Psoas muscle (tissue), 8 donors: ENCODE measurements at regions of chr11 and their contacts with region 1.

Region 1: DNA sequence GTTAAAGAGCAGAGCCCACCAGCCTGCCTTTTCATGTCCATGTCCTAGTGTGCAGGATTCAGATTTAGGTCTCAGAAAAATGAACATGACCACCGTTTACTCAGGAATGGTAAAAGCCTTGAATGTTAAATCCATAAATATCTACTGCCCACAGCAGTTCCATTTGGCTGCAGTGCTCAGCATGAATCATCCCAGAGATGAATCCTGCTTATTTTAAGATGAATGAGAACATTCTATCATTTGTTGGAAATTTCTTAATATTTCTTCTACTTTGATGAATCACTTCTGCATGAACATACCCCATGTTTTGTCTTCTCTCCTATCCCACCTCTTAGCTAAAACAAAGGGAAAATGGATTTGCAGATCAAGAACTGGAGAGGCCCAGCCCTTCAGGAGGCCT is 47.5 kb upstream of the AQP11 start:
- DNase-seq: no peak
- ATAC-seq: no peak
- H3K4me3 ChIP-seq: no peak overlapping the region
- H3K27ac ChIP-seq: no peak overlapping the region
- H3K4me1 ChIP-seq: no peaks in the 10 kb centered on the region
- H3K27me3 ChIP-seq: no peaks in the 10 kb centered on the region
- CTCF ChIP-seq: no peak

Region 2: GRCh38 chr11:77411717-77412441 is 130.4 kb before region 1 on chr11:
- intact Hi-C with region 1: no loop called
- DNase-seq: peak; percentile 82 to 91
- ATAC-seq: peak; percentile 85 to 93 (median 90)
- H3K4me3 ChIP-seq: peak overlapping the region; percentile 81
- H3K27ac ChIP-seq: peak overlapping the region; percentile 85
- H3K4me1 ChIP-seq: peaks cover 14% of the 10 kb centered on the region
- H3K27me3 ChIP-seq: no peaks in the 10 kb centered on the region
- CTCF ChIP-seq: no peak

Region 3: GRCh38 chr11:77442394-77443053 is 99.8 kb before region 1 on chr11:
- intact Hi-C with region 1: no loop called
- DNase-seq: no peak
- ATAC-seq: no peak
- H3K4me3 ChIP-seq: no peak overlapping the region
- H3K27ac ChIP-seq: no peak overlapping the region
- H3K4me1 ChIP-seq: no peaks in the 10 kb centered on the region
- H3K27me3 ChIP-seq: no peaks in the 10 kb centered on the region
- CTCF ChIP-seq: no peak

Region 4: DNA sequence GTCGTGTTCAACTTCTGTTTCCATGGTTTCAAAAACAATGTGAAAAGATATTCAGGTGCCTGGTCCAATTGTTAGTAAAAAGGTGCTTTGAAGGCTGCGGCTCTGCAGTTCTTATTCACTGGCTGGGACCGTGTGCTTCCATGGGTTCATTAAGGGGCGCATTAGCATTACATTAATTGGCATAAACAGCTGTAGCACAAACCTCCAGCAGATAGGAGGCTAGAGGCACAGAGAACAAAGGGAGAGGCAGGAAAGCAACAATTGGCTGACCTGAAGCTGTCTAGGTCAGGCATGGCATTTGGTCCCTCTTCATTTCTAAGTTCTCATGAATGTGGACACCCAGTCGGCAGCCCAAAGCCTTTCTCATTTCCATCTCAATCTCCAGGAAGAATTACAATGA is 85.0 kb before region 1 on chr11:
- intact Hi-C with region 1: no loop called
- DNase-seq: no peak
- ATAC-seq: peak in 2 of 4 donors; percentile 36 to 49
- H3K4me3 ChIP-seq: no peak overlapping the region
- H3K27ac ChIP-seq: peak overlapping the region; percentile 33
- H3K4me1 ChIP-seq: peaks cover 19% of the 10 kb centered on the region
- H3K27me3 ChIP-seq: no peaks in the 10 kb centered on the region
- CTCF ChIP-seq: no peak

Region 5: DNA sequence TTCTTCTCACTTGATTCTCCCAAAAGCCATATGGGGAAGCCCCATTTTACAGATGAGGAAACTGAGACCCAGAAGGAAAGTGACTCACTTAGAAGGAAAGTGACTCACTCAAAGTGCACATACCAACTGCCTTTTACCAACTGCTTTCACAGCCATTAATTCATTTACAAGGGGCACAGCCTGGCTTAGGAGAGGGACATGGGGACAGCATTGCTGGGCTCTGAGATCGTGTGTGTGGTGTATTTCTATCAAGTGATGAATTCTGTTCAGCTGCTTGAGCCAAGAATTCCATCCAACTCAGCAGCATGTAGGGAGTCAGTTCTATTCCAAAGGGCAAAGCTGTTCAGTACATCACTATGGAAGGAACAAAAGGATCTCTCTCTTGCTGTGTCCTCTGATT is 44.9 kb before region 1 on chr11:
- intact Hi-C with region 1: loop called in 1 of 2 experiments (anchors 2 kb)
- DNase-seq: no peak
- ATAC-seq: peak in 1 of 4 donors; percentile 55
- H3K4me3 ChIP-seq: no peak overlapping the region
- H3K27ac ChIP-seq: no peak overlapping the region
- H3K4me1 ChIP-seq: no peaks in the 10 kb centered on the region
- H3K27me3 ChIP-seq: no peaks in the 10 kb centered on the region
- CTCF ChIP-seq: no peak

Region 6: DNA sequence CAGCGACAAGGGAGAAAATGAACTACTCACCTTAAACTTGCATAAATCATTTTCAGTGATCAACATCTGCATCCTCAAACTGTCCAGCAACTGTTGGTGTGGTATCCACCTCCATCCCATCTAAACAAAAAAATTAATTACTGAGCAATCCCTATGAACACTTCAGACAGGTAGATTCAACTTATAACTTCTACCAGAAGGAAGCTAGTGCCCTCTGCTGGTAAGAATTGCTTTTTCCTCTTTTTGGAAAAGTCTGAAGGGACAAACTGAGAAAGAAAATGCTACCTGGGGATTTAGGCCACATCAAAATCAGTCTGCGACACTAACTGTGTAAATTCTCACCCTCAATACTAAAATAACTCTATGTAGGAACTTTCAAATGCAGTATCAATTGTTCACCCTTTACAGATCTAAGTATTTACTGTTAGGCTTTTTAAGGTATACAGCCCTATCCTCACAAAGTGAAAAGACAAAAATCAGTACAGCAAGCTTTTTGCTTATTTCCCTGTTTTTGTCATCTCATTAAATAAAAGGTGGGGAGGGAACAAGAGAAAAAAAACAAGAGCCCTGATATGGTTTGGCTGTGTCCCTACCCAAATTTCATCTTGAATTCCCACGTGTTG is 77.4 kb after region 1 on chr11:
- intact Hi-C with region 1: no loop called
- DNase-seq: no peak
- ATAC-seq: peak in 1 of 4 donors; percentile 55
- H3K4me3 ChIP-seq: no peak overlapping the region
- H3K27ac ChIP-seq: no peak overlapping the region
- H3K4me1 ChIP-seq: no peaks in the 10 kb centered on the region
- H3K27me3 ChIP-seq: no peaks in the 10 kb centered on the region
- CTCF ChIP-seq: peak; percentile 70